ENCODE measurements at regions of chr10 and their contacts with region 1.

Region 1: GRCh38 chr10:12788277-12788676 is 213.2 kb downstream of the CCDC3 start:
- DNase-seq: no peak
- H3K4me3 ChIP-seq: no peak overlapping the region
- CTCF ChIP-seq: no peak
- POLR2A ChIP-seq: no peak

Region 2: GRCh38 chr10:12854988-12855387 is 66.7 kb after region 1 on chr10:
- intact Hi-C with region 1: loop called (anchors 2 kb)
- DNase-seq: no peak
- H3K4me3 ChIP-seq: no peak overlapping the region
- CTCF ChIP-seq: no peak
- POLR2A ChIP-seq: no peak